Activated naive CD4-positive, alpha-beta T cell treated with anti-CD3 and anti-CD28 coated beads for 36 hours (primary cell): ENCODE measurements at regions of chr3 and their contacts with region 1.

Region 1: DNA sequence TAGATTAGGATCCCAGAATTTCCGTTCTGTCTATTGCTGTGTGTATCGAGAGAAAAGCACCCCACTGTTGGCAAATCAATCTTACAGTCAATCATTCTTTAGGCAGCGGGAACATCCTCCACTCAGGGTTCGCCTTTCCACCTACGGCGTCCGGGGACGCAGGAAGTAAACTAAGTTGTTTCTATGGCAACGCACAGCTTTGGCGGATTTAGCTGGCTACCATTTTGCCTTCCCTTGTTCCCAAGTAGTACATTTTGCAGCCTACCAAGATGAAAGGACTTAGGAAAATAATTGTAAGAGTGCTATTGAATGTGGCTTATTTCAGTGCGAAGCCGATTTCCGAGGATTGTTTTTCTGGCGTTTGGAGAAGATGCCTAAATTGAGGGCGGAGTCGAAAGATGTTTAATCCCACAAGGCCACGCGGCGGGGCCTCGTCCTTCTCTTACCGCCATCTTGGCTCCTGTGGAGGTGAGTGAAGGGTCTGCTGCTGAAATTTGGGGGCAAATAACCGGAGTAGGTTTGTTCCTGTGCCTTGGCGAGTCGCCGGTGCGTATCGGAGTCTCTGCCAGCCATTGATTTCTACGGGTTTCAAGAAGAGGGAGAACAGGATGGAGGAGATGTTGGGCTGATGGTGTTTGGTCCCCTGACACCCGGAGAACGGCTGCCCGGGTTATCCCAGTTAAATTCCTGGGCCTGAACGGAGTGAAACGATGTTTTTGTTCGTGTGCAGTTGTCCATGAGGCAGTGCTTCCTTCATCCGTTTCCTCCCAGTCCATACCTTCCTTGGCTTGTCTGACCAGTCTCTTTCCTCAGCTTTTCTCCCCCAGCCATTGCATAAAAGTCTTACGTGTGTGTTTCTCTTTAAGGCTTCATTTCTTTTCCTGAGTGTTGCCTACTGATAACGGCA is at the start of gene RPL35A:
- DNase-seq: peak; percentile 88
- H3K4me3 Mint-ChIP-seq: peak within 1 kb of the TSS; percentile 94
- H3K27ac Mint-ChIP-seq: peak within 1 kb of the TSS; percentile 99
- H3K4me1 Mint-ChIP-seq: peaks cover 42% of the 10 kb centered on the region
- H3K27me3 Mint-ChIP-seq: no peaks in the 10 kb centered on the region
- total RNA-seq, gene RPL35A: 1,826 to 1,852 TPM

Region 2: GRCh38 chr3:197959898-197960693 is 10.1 kb after region 1 on chr3 and contains the start of gene LMLN:
- CTCF ChIA-PET with region 1: interaction called, 3 read pairs
- intact Hi-C with region 1: loop called (anchors 1 kb)
- DNase-seq: peak; percentile 95
- H3K4me3 Mint-ChIP-seq: peak within 1 kb of the TSS; percentile 85
- H3K27ac Mint-ChIP-seq: peak within 1 kb of the TSS; percentile 88
- H3K4me1 Mint-ChIP-seq: peaks cover 43% of the 10 kb centered on the region
- H3K27me3 Mint-ChIP-seq: no peaks in the 10 kb centered on the region
- total RNA-seq, gene LMLN: 2.1 to 2.2 TPM